HCT116 (cell line): ENCODE measurements at regions of chr6 and their contacts with region 1.

Region 1: GRCh38 chr6:31597006-31597405 is 4.2 kb upstream of the NCR3 start:
- DNase-seq: peak; percentile 38
- ATAC-seq: peak; percentile 72
- H3K4me3 ChIP-seq: no peak overlapping the region
- H3K27ac ChIP-seq: no peak overlapping the region
- H3K4me1 ChIP-seq: peaks cover 0 to 3% of the 10 kb centered on the region in 2 experiments; a peak in 1 of 4 replicates
- H3K27me3 ChIP-seq: no peaks in the 10 kb centered on the region
- CTCF ChIP-seq: peak; percentile 49 to 58 (median 57); a peak in 4 of 6 replicates
- POLR2A ChIP-seq: no peak
- RAD21 ChIP-seq: peak; percentile 53

Region 2: GRCh38 chr6:31203345-31203979 is 393.5 kb before region 1 on chr6:
- CTCF ChIA-PET with region 1: no interaction called
- POLR2A ChIA-PET with region 1: no interaction called
- RAD21 ChIA-PET with region 1: no interaction called
- intact Hi-C with region 1: loop called (anchors 5 kb)
- DNase-seq: peak; percentile 74
- ATAC-seq: peak; percentile 74
- H3K4me3 ChIP-seq: peak overlapping the region; percentile 6 to 34; a peak in 3 of 4 replicates
- H3K27ac ChIP-seq: peak overlapping the region; percentile 56
- H3K4me1 ChIP-seq: peaks cover 23 to 45% of the 10 kb centered on the region in 2 experiments
- H3K27me3 ChIP-seq: no peaks in the 10 kb centered on the region
- CTCF ChIP-seq: no peak
- POLR2A ChIP-seq: no peak
- RAD21 ChIP-seq: no peak

Region 3: DNA sequence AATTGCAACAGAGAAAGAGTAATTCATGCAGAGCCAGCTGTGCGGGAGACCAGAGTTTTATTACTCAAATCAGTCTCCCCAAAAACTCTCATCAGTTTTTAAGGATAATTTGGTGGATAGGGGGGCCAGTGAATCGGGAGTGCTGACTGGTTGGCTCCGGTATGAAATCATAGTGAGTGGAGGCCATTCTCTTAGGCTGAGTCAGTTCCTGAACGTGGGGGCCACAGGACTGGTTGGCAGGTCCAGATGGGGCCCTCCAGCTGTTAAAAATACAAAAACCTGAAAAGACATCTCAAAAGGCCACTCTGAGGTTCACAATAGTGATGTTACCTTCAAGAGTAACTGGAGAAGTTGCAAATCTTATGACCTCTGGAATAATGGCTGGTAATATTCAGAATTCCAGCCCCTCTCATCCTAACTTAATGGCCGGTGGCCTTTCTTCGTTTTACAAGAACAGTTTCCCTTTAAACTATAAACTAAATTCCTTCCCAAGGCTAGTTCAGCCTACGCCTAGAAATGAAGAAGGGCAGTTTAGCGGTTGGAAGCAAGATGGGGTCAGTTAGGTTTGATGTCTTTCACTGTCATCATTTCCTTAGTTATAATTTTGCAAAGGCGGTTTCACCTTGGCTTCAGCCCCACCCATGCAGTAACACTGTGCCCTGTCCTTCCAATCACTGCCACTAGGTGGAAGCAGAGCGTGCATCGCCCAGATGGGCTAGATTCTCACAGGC is 200.4 kb before region 1 on chr6:
- CTCF ChIA-PET with region 1: interaction called, 6 read pairs
- POLR2A ChIA-PET with region 1: no interaction called
- RAD21 ChIA-PET with region 1: no interaction called
- intact Hi-C with region 1: loop called (anchors 1 kb)
- DNase-seq: peak; percentile 75
- ATAC-seq: peak; percentile 46
- H3K4me3 ChIP-seq: no peak overlapping the region
- H3K27ac ChIP-seq: no peak overlapping the region
- H3K4me1 ChIP-seq: peaks cover 24 to 31% of the 10 kb centered on the region in 2 experiments
- H3K27me3 ChIP-seq: no peaks in the 10 kb centered on the region
- CTCF ChIP-seq: peak; percentile 77 to 84 (median 79)
- POLR2A ChIP-seq: no peak
- RAD21 ChIP-seq: peak; percentile 72

Region 4: DNA sequence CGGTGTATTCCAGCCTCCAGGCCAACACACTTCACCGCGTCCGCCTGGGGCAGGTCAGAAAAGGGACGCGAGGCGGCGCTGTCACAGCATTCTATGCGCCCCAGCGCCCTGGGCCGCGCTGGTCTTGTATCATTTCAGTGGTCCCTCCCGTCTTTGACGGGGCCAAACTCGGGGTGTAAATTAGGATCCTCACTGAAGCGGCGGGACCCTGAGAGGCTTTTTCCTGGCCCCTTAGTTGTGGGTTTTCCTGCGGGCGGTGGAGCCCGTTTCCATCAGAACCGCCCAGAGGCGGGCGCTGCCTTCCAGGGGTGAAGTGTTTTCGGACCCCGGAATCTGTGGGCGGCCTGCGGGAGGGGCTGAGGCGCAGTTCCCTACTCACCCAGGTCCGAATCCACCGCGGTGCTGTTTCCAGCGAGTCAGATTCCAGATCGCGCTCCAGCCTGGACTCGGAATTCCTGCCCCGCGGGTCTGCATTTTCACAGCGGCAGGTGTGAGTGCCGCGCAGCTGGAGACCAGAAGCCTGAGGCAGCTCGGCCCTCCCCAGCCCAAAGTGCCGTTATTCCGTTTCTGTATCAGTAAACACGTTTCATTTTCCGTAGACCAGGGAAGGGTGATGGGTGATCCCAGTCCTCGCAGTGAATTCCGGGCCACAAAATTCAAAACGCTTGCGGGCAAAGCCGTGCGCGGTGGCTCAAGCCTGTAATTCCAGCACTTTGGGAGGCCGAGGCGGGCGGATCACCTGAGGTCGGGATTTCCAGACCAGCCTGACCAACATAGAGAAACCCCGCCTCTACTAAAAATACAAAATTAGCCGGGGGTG is 102.9 kb before region 1 on chr6:
- CTCF ChIA-PET with region 1: interaction called, 16 read pairs
- POLR2A ChIA-PET with region 1: interaction called, 4 read pairs
- RAD21 ChIA-PET with region 1: interaction called in 1 of 2 experiments, 3 read pairs
- intact Hi-C with region 1: loop called (anchors 2 kb)
- DNase-seq: peak; percentile 66
- ATAC-seq: peak; percentile 69
- H3K4me3 ChIP-seq: peak overlapping the region; percentile 74 to 88
- H3K27ac ChIP-seq: peak overlapping the region; percentile 76
- H3K4me1 ChIP-seq: peaks cover 23 to 45% of the 10 kb centered on the region in 2 experiments
- H3K27me3 ChIP-seq: no peaks in the 10 kb centered on the region
- CTCF ChIP-seq: peak; percentile 82 to 90 (median 88)
- POLR2A ChIP-seq: no peak
- RAD21 ChIP-seq: peak; percentile 85

Region 5: GRCh38 chr6:31546962-31547726 is 49.9 kb before region 1 on chr6 and contains the start of gene NFKBIL1:
- CTCF ChIA-PET with region 1: interaction called, 78 read pairs
- POLR2A ChIA-PET with region 1: interaction called, 9 read pairs
- RAD21 ChIA-PET with region 1: interaction called, 8 to 11 read pairs
- intact Hi-C with region 1: loop called (anchors 1 kb)
- DNase-seq: peak; percentile 97
- ATAC-seq: peak; percentile 78
- H3K4me3 ChIP-seq: peak within 1 kb of the TSS; percentile 51 to 67
- H3K27ac ChIP-seq: peak within 1 kb of the TSS; percentile 50
- H3K4me1 ChIP-seq: peaks cover 19 to 30% of the 10 kb centered on the region in 2 experiments
- H3K27me3 ChIP-seq: no peaks in the 10 kb centered on the region
- CTCF ChIP-seq: no peak
- POLR2A ChIP-seq: peak; percentile 37
- RAD21 ChIP-seq: no peak
- total RNA-seq, gene NFKBIL1: 26.6 TPM

Region 6: DNA sequence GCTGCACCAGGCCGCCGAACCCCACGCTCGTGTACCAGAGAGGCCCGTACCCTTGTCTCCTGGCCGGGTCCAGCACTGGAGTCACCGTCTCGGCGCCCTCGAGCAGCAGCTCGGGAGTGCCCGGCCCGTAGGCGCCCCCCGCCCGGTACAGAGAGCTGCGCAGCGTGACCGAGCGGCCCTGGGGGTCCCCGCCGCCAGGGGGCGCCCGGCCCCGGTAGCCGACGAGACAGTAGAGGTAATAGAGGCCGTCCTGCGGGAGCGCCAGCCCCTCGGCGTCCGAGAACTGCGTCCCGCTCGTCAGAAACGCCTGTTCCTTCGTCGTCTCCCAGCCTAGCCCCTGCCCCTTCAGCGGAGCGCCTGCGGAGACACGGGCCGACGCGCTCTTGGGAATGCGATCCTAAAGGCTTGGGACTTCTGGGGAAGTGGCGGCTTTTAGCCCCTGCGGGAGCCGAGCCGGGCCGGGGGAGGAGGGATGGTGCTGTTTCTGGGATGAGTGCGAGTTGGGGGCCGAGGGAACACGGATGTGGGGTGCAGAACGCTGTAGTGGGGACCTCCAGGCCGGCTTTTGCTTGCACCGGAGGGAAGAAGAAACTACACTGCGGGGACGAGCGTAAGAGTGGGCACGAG is 16.1 kb before region 1 on chr6:
- CTCF ChIA-PET with region 1: interaction called, 70 read pairs
- POLR2A ChIA-PET with region 1: interaction called, 3 read pairs
- RAD21 ChIA-PET with region 1: interaction called in 1 of 2 experiments, 3 read pairs
- intact Hi-C with region 1: no loop called
- DNase-seq: peak; percentile 33
- ATAC-seq: peak; percentile 97
- H3K4me3 ChIP-seq: peak overlapping the region; percentile 65 to 75
- H3K27ac ChIP-seq: peak overlapping the region; percentile 8; the same call in 1 of the 2 replicates
- H3K4me1 ChIP-seq: peaks cover 4 to 15% of the 10 kb centered on the region in 2 experiments; a peak in 2 of 4 replicates
- H3K27me3 ChIP-seq: no peaks in the 10 kb centered on the region
- CTCF ChIP-seq: peak; percentile 87 to 96 (median 88)
- POLR2A ChIP-seq: no peak
- RAD21 ChIP-seq: peak; percentile 57

Region 7: GRCh38 chr6:31639449-31639861 is 42.4 kb after region 1 on chr6:
- CTCF ChIA-PET with region 1: no interaction called
- POLR2A ChIA-PET with region 1: no interaction called
- RAD21 ChIA-PET with region 1: interaction called in 1 of 2 experiments, 12 read pairs
- intact Hi-C with region 1: no loop called
- DNase-seq: no peak
- ATAC-seq: no peak
- H3K4me3 ChIP-seq: no peak overlapping the region
- H3K27ac ChIP-seq: no peak overlapping the region
- H3K4me1 ChIP-seq: no peaks in the 10 kb centered on the region
- H3K27me3 ChIP-seq: no peaks in the 10 kb centered on the region
- CTCF ChIP-seq: no peak
- POLR2A ChIP-seq: no peak
- RAD21 ChIP-seq: no peak

Region 8: DNA sequence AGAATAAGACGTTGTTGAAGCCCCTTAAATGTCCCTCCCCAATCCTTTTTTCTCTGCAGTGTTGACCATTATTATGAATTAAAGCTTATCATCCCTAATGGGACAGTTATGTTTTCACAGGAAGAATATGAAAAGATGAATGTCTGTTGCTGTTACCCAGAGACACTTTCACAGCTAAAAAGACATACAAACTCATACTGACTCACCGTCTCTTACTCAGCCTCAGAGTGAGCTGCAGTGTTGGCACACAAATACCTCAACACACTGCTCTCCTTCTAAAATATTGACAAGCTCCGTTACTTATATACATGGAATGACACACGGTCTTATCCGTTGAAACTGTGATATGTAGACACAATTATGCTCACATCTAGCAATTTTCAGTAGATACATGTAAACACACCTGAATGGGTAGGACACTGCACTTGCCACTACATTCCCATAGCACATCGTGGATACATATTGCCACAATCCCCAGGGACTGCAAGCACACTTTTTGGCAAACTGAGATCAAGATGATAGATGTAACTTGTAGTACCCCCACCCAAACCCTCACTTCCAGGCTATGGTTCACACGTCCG is 155.8 kb after region 1 on chr6:
- CTCF ChIA-PET with region 1: no interaction called
- POLR2A ChIA-PET with region 1: no interaction called
- RAD21 ChIA-PET with region 1: no interaction called
- intact Hi-C with region 1: no loop called
- DNase-seq: no peak
- ATAC-seq: peak; percentile 48; the same call in 1 of the 2 replicates
- H3K4me3 ChIP-seq: no peak overlapping the region
- H3K27ac ChIP-seq: no peak overlapping the region
- H3K4me1 ChIP-seq: no peaks in the 10 kb centered on the region
- H3K27me3 ChIP-seq: no peaks in the 10 kb centered on the region
- CTCF ChIP-seq: no peak
- POLR2A ChIP-seq: no peak
- RAD21 ChIP-seq: no peak

Region 9: DNA sequence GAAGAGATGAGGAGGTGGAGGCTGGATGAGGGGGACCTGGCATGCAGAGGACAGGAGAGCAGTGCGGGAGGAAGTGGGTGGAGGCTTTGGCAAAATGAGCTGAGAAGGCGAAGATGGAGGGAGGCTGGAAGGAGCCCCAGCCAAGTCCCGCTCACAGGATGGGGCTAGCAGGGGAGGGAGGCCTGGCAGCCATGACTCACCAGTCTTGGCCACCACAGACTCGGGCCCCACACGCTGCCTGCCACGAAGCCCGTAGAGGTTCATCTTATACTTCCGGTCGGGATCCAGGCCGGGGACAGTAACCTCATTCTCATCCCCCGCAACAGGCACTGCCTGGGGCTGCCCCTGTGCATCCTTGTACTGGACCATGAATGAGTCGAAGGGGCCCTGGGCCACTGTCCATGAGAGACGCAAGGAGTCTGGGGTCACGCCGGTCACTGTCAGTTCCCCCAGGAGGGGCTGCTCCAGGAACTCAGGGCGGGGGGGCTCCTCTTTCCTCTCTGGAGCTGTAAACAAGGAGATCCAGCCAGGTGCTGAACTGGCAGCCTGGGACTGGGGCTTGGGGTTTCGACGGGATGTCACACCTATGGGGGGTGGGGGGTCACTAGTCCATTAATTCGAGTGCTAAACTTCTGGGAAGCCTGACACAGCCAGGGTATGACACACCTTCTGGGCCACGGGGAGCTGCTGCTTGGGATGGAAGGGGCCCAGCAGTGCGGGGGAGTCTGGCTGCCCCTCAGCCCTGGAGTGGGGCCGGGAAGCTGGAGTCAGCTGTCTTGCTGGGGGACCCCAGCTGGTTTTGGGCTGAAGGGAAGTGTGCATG is 484.4 kb after region 1 on chr6:
- CTCF ChIA-PET with region 1: no interaction called
- POLR2A ChIA-PET with region 1: no interaction called
- RAD21 ChIA-PET with region 1: no interaction called
- intact Hi-C with region 1: no loop called
- DNase-seq: no peak
- ATAC-seq: no peak
- H3K4me3 ChIP-seq: no peak overlapping the region
- H3K27ac ChIP-seq: no peak overlapping the region
- H3K4me1 ChIP-seq: peaks cover 4 to 34% of the 10 kb centered on the region in 2 experiments
- H3K27me3 ChIP-seq: no peaks in the 10 kb centered on the region
- CTCF ChIP-seq: no peak
- POLR2A ChIP-seq: no peak
- RAD21 ChIP-seq: no peak